ENCODE measurements at regions of chrX and their contacts with region 1.

Region 1: DNA sequence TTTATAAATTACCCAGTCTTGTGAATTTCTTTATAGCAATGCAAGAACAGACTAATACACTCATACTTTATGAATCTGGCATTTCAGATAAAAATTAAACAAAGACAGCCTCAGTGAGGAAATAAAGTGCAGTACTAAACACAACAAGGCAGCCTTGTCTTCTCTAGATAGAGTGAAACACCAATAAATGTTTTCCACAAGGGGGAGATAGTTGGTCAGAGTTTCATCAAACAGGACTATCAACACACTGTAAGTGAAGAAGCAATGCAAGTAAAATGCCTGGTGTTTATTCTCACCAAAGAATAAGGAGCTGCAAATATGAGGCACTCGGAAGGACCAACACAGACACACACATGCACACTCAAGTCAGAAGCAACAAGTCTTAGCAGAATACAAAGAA is 62.8 kb downstream of the FAM9B start:
- DNase-seq: peak; percentile 57

Region 2: DNA sequence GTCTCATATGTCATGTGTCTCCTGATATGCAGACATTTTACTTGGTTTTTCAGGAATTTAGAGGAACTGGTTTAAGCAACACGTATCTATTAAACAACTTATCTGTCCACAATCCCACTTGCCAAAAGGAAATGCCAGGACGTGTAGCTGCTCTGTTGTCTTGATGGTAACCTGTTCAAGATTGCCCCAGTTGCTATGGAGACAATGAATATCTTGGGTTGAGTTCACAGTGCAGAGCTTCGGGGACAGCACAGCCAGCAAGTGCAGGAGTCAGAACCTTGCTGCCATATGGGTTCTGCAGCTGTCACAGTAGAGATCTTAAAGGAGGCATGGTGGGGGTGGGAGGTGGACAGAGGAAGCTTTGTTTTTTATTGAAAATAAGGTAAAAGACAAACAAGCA is 91.5 kb after region 1 on chrX:
- in situ Hi-C with region 1: no loop called
- DNase-seq: no peak

Region 3: DNA sequence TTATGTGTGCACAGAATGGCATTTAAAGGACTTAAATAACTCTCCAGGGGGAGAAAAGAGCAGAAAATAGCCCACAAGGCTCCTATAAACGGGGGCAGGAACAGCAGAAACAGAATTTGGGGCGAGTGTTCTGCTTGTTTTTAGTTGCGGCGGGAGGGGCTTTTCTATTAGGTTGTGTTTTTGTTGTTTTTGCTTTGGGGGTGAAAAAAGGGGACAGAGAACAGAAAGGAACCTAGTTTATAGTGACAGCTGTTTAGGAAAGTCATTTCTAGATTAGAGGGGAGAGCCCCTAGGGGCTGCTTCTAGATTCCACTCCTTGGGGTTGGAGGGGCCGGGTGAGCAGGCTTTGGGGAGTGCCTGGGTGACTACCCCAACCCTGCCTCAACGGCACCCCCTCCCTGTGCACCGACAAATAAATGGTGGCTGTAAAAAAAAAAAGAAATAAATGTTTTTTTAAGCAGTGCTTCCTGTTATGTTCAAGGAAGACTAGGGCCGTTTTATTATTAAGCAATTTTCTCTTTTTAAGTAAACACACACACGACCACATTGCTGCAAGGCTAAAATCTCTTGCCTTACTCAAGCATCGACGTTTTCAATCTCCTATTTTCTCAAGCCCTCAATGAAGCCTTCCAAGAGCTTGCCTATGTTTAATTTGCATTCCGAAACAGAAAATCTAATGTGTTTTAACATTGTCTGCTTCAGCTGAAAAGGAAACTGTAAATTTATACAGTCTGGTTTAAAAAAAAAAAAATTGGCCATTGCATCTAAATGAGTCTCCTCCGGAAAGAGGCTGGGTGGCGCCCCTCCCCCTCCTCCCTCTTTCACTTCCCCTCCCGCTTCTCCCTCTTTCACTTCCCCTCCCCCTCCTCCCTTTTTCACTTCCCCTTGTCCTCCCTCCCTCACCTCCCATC is 370.4 kb after region 1 on chrX:
- in situ Hi-C with region 1: loop called (anchors 25 kb)
- DNase-seq: peak; percentile 88

Measured in KBM-7 (cell line).